A549 (cell line): ENCODE measurements at regions of chr20 and their contacts with region 1.

Region 1: GRCh38 chr20:59751056-59751688 is 146.8 kb downstream of the PHACTR3 start:
- DNase-seq: peak; percentile 68 to 72
- ATAC-seq: peak; percentile 87 to 96
- H3K4me3 ChIP-seq: no peak overlapping the region
- H3K27ac ChIP-seq: no peak overlapping the region
- H3K4me1 ChIP-seq: no peaks in the 10 kb centered on the region
- CTCF ChIP-seq: peak; percentile 63
- EP300 ChIP-seq: no peak
- POLR2A ChIP-seq: no peak
- RAD21 ChIP-seq: peak; percentile 76 to 77

Region 2: GRCh38 chr20:59585714-59586409 is 165.3 kb before region 1 on chr20:
- CTCF ChIA-PET with region 1: no interaction called
- POLR2A ChIA-PET with region 1: no interaction called
- DNase-seq: no peak
- ATAC-seq: no peak
- H3K4me3 ChIP-seq: no peak overlapping the region
- H3K27ac ChIP-seq: no peak overlapping the region
- H3K4me1 ChIP-seq: no peaks in the 10 kb centered on the region
- CTCF ChIP-seq: no peak
- EP300 ChIP-seq: no peak
- POLR2A ChIP-seq: no peak
- RAD21 ChIP-seq: no peak

Region 3: DNA sequence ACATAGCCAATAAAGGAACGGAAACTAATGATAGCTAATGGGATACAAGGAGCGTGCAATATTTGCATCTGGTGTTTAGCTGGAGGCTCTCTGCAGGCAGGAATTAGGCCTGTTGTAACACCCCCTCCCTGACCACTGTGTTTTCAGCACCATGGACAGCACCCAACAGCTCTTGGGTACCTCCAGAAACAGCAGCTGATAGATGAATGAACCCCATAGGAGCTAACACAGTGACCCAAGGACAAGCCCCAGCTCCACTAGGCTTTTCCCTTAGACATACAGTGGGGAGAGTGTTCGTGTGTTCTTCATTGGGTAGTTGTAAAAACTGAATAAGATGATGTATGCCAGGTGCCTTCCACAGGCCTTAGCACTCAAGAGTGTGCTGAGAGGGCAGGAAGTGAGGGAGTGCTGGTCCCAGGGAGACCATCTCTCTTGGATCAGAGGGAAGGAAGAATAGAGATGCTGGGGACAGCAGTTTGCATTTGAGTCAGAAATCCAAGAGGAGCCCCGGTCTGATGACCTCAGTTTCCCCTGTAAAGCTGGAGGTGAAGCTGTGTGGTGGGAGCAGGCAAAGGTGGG is 14.5 kb after region 1 on chr20:
- CTCF ChIA-PET with region 1: interaction called, 10 read pairs
- POLR2A ChIA-PET with region 1: no interaction called
- DNase-seq: no peak
- ATAC-seq: no peak
- H3K4me3 ChIP-seq: no peak overlapping the region
- H3K27ac ChIP-seq: no peak overlapping the region
- H3K4me1 ChIP-seq: no peaks in the 10 kb centered on the region
- CTCF ChIP-seq: no peak
- EP300 ChIP-seq: no peak
- POLR2A ChIP-seq: no peak
- RAD21 ChIP-seq: no peak